ENCODE measurements at regions of chr17 and their contacts with region 1.

Region 1: DNA sequence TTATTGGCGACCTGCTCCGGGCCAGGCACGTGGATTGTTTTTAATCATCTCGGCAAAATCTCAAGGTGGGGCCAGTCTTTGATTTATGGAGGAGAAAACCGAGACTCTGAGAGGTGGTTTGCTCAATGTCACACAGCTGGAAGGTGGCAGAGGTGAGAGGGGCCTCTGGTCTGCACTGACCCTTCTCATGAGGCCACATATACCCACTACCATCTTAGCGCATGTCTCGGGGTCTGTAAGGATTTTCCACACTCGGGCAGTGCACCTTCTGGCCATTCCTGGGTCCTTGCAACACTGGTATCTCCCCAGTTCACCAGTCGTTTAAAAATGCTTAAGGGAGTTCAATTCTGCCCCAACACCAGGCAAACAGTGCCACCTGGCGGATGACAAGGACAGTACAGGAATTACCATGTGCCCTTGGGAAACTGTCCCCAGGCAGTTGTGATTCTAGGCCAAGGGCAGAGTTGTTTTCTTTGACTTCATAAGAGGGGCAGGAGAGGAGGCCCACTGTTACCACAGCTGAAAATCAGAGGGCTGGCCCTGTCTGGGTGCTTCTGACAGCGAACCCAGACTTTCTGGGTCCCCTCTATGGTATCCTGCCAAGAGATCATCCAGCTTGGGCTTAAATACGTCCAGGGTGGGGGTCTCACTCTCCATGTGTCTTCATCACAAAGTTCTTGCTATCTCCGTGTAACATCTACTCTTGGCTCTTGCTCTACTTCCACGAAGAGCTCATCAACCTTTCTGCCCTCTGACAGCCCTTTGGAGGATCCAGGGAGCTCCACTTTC is 39.4 kb upstream of the RAI1 start:
- DNase-seq: peak; percentile 65 to 90 (median 78)
- ATAC-seq: peak; percentile 89
- H3K4me3 ChIP-seq: no peak overlapping the region
- H3K4me3 Mint-ChIP-seq: no peak overlapping the region
- H3K27ac ChIP-seq: no peak overlapping the region
- H3K27ac Mint-ChIP-seq: no peak overlapping the region
- H3K4me1 ChIP-seq: peaks cover 4% of the 10 kb centered on the region
- H3K4me1 Mint-ChIP-seq: no peaks in the 10 kb centered on the region
- H3K27me3 ChIP-seq: no peaks in the 10 kb centered on the region
- H3K27me3 Mint-ChIP-seq: peaks cover 8% of the 10 kb centered on the region
- CTCF ChIP-seq: peak; percentile 92

Region 2: DNA sequence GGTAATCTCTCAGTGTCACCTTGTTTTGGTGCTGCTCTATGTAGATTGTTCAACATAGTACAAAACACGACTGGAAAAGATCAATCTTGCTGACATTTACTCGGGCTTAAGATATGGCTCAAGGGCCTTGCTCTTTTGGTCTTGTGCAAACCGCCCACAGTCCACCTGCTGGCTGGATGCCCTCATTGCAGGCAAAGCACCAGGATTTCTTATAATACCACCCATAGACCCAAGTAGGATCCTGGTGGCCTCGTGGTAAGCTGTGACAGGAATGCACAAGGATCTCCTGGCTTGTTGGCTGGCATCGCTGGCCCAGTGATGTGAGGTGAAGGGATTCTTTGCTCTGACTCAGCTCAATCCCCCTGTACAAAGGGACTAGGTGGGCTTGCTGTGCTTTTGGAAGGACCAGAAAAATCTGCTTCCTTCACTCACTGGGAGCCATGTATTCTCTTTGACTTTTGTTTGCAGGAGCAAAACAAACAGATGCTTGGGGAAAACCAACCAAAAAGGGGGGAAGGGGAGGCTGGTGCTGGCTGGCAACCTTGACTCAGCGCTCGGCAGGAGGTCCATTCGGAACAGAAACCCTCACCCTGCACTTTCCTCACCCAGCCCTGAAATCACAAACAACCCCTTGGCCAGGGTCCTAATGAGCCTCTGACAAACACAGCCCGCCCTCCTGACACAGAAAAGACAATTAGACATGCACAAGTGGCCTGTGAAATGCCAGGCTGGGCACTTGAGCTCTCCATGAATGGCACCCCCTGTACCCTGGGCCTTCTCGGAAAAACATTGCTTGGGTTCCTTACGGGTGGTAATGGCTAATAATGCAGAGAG is 201.6 kb before region 1 on chr17:
- CTCF ChIA-PET with region 1: no interaction called
- POLR2A ChIA-PET with region 1: no interaction called
- intact Hi-C with region 1: loop called in 1 of 2 experiments (anchors 2 kb)
- DNase-seq: peak; percentile 58 to 88 (median 73)
- ATAC-seq: peak; percentile 67
- H3K4me3 ChIP-seq: no peak overlapping the region
- H3K4me3 Mint-ChIP-seq: no peak overlapping the region
- H3K27ac ChIP-seq: no peak overlapping the region
- H3K27ac Mint-ChIP-seq: no peak overlapping the region
- H3K4me1 ChIP-seq: peaks cover 6% of the 10 kb centered on the region
- H3K4me1 Mint-ChIP-seq: peaks cover 11% of the 10 kb centered on the region
- H3K27me3 ChIP-seq: no peaks in the 10 kb centered on the region
- H3K27me3 Mint-ChIP-seq: no peaks in the 10 kb centered on the region
- CTCF ChIP-seq: peak; percentile 83

Region 3: DNA sequence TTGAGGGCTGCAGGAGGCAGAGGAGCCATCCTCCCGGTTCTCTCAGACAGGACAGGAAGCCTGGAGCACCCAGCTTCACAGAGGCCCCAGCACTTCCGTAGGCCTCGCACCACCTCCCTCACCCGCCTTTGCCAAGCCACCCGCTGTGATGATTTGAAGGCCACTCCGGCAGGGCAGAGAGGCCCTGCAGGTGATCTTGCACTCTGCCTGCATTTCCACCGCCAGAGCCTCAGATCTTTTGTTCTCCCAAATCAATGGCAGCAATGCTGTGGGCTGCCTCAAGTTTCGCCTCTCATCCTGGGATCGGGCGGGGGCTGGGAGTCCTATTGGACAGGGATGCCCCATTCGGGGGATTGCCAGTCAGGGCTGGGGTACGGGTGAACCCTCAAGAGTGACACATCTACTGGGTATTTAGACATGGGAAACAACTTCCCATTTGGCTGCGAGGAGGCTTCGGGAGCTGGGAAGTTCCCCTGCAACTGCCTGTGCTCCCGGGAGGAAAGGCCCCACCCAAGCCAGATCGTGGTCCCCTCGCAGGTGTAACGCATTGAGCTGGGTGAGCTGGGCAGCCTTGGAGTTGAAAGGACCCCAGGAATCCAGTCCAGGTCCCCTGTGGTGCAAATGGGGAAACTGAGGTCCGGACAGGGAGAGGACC is 15.5 kb before region 1 on chr17:
- CTCF ChIA-PET with region 1: no interaction called
- POLR2A ChIA-PET with region 1: no interaction called
- intact Hi-C with region 1: no loop called
- DNase-seq: no peak
- ATAC-seq: no peak
- H3K4me3 ChIP-seq: no peak overlapping the region
- H3K4me3 Mint-ChIP-seq: no peak overlapping the region
- H3K27ac ChIP-seq: no peak overlapping the region
- H3K27ac Mint-ChIP-seq: no peak overlapping the region
- H3K4me1 ChIP-seq: peaks cover 10% of the 10 kb centered on the region
- H3K4me1 Mint-ChIP-seq: peaks cover 9% of the 10 kb centered on the region
- H3K27me3 ChIP-seq: no peaks in the 10 kb centered on the region
- H3K27me3 Mint-ChIP-seq: no peaks in the 10 kb centered on the region
- CTCF ChIP-seq: no peak

Measured in CD4-positive, alpha-beta T cell (primary cell).